ENCODE measurements at regions of chr11 and their contacts with region 1.

Region 1: GRCh38 chr11:62905927-62906531 is 15.1 kb downstream of the CHRM1 start:
- DNase-seq: peak; percentile 81
- ATAC-seq: peak; percentile 91

Region 2: DNA sequence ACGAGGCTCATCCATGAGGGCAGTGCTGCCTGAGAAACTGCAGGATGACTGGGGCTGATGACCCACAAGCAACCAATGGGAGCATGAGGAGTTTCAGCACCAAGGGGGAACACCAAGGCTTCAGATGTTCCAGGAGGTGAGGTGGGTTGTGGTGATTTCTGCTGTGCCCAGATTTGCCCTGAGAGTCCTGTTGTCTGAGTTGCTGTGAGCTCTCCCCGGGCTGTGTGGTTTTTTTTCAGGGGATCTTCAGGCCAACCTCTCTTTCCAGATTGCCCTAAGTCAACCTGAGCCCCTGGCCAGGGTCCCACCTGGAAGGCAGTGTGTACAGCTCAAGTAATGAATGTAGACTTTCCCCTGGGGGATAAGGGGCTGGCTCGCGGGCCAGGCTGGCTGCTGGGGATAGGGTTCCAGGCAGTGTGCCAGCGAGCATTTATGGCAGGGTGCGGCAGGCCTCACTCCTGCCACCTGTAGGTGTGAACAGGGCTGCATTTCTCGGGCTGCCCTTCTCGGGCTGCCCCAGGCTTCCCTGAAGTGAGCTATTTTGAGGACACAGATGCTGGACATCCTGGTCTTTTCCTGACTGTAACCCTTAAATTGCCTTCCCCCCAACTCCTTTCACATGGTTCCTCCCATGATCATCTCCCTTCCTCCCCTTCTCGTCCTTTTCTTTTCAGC is 69.0 kb after region 1 on chr11:
- intact Hi-C with region 1: loop called (anchors 10 kb)
- DNase-seq: peak; percentile 72
- ATAC-seq: peak; percentile 94

Region 3: GRCh38 chr11:63023841-63024648 is 118.0 kb after region 1 on chr11:
- intact Hi-C with region 1: loop called (anchors 1 kb)
- DNase-seq: peak; percentile 92
- ATAC-seq: peak; percentile 96